Activated CD4-positive, alpha-beta T cell treated with anti-CD3 and anti-CD28 coated beads, Interleukin-2, amount 10 ng/mL, durations not matched to agents 24 days and 14 days (primary cell): ENCODE measurements at regions of chr15 and their contacts with region 1.

Region 1: DNA sequence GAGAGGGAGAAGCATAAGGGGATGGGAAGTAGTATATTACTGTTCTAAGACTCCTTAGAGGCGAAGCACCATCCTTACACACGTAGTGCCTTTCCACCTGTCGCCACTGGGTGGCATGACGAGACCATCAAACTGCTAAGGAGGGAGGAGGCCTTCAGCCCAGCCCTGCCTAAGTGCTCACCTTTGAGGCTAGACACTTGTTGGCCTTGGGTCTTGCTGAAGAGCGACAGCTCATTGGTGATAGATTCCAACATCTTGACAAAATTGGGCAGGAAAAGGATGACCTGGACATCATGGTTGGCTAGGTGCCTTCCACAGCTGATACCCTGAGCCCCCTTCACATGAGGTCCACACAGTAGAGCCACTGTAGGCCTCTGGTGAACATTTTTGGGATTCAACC is 19.6 kb downstream of the CLK3 start:
- DNase-seq: peak; percentile 93
- H3K4me3 Mint-ChIP-seq: no peak overlapping the region
- H3K27ac Mint-ChIP-seq: no peak overlapping the region
- H3K4me1 Mint-ChIP-seq: no peaks in the 10 kb centered on the region
- H3K27me3 Mint-ChIP-seq: no peaks in the 10 kb centered on the region

Region 2: DNA sequence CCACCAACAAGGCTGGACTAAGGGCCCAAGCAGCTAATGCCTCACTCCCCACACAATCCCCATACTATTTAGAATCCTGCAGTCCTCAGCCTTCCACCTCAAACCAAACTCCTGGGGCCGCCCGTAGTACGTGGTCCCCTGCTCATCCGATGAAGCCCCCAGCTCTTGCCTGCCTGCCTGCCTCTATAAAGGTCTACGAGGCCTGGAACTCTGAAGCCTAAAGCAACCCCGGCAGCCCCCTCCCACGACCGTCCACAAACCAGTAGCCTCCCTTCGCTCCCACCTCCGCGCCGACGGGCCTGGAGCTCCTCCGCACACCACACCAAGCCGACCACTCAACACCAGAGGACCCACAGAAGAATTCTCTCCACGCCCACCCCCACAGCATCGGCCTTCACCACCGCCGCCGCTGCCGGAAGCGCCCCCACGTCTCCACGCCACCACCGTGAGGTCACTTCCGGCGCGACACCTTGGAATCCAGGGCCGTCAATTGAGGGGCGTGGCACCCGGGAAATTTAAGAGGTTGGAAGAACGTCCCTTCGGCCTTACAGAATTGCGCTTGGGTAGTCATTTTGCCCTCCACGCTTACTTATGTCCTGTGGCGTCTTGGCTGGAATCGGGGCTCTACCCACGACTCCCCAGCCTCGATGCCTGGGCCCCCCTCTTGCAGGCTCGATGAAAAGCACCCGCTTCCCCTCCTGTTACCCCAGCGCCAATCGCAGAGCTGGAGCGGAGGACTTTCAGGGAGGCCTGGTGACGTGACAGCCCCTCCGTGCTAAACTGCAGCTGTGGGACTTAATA is 60.6 kb after region 1 on chr15 and contains the start of gene EDC3:
- intact Hi-C with region 1: loop called (anchors 5 kb)
- DNase-seq: peak; percentile 96
- H3K4me3 Mint-ChIP-seq: peak within 1 kb of the TSS; percentile 98
- H3K27ac Mint-ChIP-seq: peak within 1 kb of the TSS; percentile 99
- H3K4me1 Mint-ChIP-seq: peaks cover 27% of the 10 kb centered on the region
- H3K27me3 Mint-ChIP-seq: no peaks in the 10 kb centered on the region
- total RNA-seq, gene EDC3: 45.7 and 50.2 TPM in 2 replicates

Region 3: GRCh38 chr15:74950078-74951000 is 315.1 kb after region 1 on chr15:
- intact Hi-C with region 1: loop called (anchors 5 kb)
- DNase-seq: peak; percentile 95
- H3K4me3 Mint-ChIP-seq: no peak overlapping the region
- H3K27ac Mint-ChIP-seq: no peak overlapping the region
- H3K4me1 Mint-ChIP-seq: peaks cover 16% of the 10 kb centered on the region
- H3K27me3 Mint-ChIP-seq: peaks cover 4% of the 10 kb centered on the region